Ascending aorta (tissue), 2 donors: ENCODE measurements at regions of chr17 and their contacts with region 1.

Region 1: DNA sequence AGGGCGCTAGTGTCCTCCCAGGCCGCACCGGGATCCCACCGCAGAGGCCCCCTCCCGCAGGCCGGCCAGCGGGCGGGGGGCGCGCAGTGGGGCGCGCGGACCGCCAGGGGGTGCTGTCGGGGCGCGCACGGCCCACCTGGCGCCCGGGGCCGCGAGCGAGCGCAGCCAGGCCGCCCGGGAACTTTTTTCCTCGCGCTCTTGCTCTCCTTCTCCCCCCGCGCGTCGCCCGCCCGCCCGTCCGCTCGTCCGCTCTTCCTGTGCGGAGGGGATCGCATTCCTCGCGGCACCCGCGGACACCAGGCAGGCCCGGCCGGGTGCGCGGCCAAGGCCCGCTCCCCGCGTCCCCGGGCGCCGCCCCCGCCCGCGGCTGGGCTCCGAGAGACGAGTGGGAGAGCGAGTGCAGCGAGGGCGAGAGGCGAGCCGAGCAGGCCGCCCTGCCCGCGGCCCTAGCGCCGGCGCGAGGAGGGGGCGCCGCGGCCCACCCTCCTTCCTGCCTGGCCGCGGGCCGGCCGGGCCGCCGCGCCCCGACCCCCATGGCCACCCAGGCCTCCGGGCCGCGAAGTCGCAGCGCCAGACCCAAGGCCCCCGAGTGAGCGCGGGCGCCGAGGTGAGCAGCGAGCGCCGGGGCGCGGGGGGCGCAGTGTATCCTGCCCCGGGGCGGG is at the start of gene RAI1:
- DNase-seq: peak in 1 of 2 donors; percentile 82
- H3K4me3 ChIP-seq: peak within 1 kb of the TSS; percentile 72 to 93
- H3K27ac ChIP-seq: peak within 1 kb of the TSS; percentile 86 to 91
- H3K4me1 ChIP-seq: peaks cover 0 to 24% of the 10 kb centered on the region in 2 donors
- H3K27me3 ChIP-seq: no peaks in the 10 kb centered on the region
- CTCF ChIP-seq: peak in 2 of 3 experiments; percentile 48 to 97
- total RNA-seq, gene RAI1: 24.7 TPM

Region 2: GRCh38 chr17:17710728-17711541 is 29.6 kb after region 1 on chr17:
- intact Hi-C with region 1: loop called (anchors 2 kb)
- DNase-seq: peak; percentile 30 to 88
- H3K4me3 ChIP-seq: no peak overlapping the region
- H3K27ac ChIP-seq: peak overlapping the region; percentile 64 to 70
- H3K4me1 ChIP-seq: peaks cover 5 to 29% of the 10 kb centered on the region in 2 donors
- H3K27me3 ChIP-seq: no peaks in the 10 kb centered on the region
- CTCF ChIP-seq: no peak

Region 3: GRCh38 chr17:17781591-17782496 is 100.5 kb after region 1 on chr17:
- intact Hi-C with region 1: loop called (anchors 2 kb)
- DNase-seq: peak in 1 of 2 donors; percentile 85
- H3K4me3 ChIP-seq: peak overlapping the region; percentile 60 to 76
- H3K27ac ChIP-seq: peak overlapping the region; percentile 82 to 83
- H3K4me1 ChIP-seq: peaks cover 12 to 22% of the 10 kb centered on the region in 2 donors
- H3K27me3 ChIP-seq: no peaks in the 10 kb centered on the region
- CTCF ChIP-seq: no peak

Region 4: GRCh38 chr17:17859909-17860765 is 178.8 kb after region 1 on chr17:
- intact Hi-C with region 1: loop called (anchors 1 kb)
- DNase-seq: no peak
- H3K4me3 ChIP-seq: no peak overlapping the region
- H3K27ac ChIP-seq: no peak overlapping the region
- H3K4me1 ChIP-seq: peaks cover 8 to 13% of the 10 kb centered on the region in 2 donors
- H3K27me3 ChIP-seq: no peaks in the 10 kb centered on the region
- CTCF ChIP-seq: peak; percentile 96

Region 5: DNA sequence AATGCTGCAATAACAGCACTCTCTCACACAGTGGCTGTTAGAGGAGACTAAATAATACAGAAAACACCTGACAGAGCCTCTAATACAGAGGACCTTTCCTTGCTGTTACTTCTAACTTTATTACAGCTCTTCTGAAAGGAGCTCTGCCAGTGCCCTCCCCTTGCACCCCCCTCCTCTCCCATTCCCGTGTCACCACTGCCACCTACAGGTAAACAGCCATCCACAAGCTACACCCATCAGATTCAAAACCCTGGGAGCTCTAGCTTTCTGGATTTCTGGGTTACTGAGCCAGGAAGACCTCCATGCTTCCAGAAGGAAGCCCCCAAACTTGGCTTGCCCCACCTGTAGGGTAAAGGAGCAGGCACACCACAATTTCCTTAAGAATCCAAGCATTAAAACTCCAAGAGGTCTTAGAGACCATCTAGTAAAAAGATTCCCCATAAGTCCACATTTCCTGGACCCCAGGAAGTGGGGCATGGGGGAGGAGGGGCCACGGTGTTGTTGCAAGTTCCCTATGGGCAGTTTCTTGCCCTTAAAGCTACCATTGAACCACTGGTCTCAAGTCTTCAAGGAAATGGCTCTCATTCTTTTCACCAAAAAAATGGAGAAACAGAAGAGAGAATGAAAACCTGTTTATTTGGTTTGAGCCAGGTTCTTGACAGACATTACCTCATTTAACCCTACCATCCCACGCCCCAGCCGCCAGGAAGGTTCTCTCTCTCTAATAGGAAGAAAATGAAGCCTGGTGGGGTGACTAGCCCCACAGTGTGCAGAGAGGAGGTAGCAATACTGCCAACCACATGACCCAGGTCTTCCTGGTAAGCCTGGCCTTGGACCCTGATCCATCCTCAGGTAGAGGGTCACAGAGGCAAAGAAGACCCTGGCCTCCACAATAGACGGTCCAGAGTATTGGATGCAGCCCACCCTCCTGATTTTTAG is 238.1 kb after region 1 on chr17:
- intact Hi-C with region 1: loop called (anchors 1 kb)
- DNase-seq: peak in 1 of 2 donors; percentile 83
- H3K4me3 ChIP-seq: no peak overlapping the region
- H3K27ac ChIP-seq: no peak overlapping the region
- H3K4me1 ChIP-seq: peaks cover 3 to 16% of the 10 kb centered on the region in 2 donors
- H3K27me3 ChIP-seq: no peaks in the 10 kb centered on the region
- CTCF ChIP-seq: peak; percentile 68 to 81 (median 69)

Region 6: GRCh38 chr17:18033442-18034099 is 352.3 kb after region 1 on chr17:
- intact Hi-C with region 1: loop called (anchors 2 kb)
- DNase-seq: peak in 1 of 2 donors; percentile 70
- H3K4me3 ChIP-seq: no peak overlapping the region
- H3K27ac ChIP-seq: no peak overlapping the region
- H3K4me1 ChIP-seq: peaks cover 3 to 9% of the 10 kb centered on the region in 2 donors
- H3K27me3 ChIP-seq: no peaks in the 10 kb centered on the region
- CTCF ChIP-seq: peak; percentile 43 to 67 (median 66)